A549 (cell line): ENCODE measurements at regions of chr14 and their contacts with region 1.

Region 1: DNA sequence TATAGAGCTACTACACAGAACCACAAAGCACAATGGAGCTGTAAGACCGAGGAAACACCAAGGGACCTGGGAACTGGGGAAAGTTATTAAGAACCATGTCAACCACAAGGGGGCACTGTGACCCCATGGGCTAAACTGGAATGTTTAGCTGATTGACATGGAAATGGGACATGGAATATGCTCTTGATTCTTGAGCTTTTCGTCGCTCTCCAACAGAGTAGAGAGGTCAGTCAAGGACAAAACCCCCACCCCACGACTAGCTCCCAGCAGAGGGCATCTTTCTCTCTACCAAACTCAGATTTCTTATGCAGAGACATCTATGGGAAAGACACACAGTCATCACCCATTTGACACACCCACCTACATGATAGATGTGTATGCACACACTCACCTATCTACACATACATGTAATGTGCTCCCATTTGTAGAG is 10.1 kb downstream of the NDRG2 start:
- DNase-seq: peak; percentile 76 to 86
- ATAC-seq: peak; percentile 92 to 95
- H3K4me3 ChIP-seq: no peak overlapping the region
- H3K27ac ChIP-seq: no peak overlapping the region
- H3K4me1 ChIP-seq: no peaks in the 10 kb centered on the region
- CTCF ChIP-seq: peak; percentile 93
- EP300 ChIP-seq: no peak
- POLR2A ChIP-seq: no peak
- RAD21 ChIP-seq: peak; percentile 90 to 96

Region 2: GRCh38 chr14:20956376-20956976 is 58.3 kb before region 1 on chr14:
- CTCF ChIA-PET with region 1: no interaction called
- POLR2A ChIA-PET with region 1: no interaction called
- DNase-seq: no peak
- ATAC-seq: no peak
- H3K4me3 ChIP-seq: no peak overlapping the region
- H3K27ac ChIP-seq: no peak overlapping the region
- H3K4me1 ChIP-seq: 0 out of 3 replicates have a peak, but pooled peaks cover 4% of the 10 kb centered on the region
- CTCF ChIP-seq: no peak
- EP300 ChIP-seq: no peak
- POLR2A ChIP-seq: no peak
- RAD21 ChIP-seq: no peak

Region 3: DNA sequence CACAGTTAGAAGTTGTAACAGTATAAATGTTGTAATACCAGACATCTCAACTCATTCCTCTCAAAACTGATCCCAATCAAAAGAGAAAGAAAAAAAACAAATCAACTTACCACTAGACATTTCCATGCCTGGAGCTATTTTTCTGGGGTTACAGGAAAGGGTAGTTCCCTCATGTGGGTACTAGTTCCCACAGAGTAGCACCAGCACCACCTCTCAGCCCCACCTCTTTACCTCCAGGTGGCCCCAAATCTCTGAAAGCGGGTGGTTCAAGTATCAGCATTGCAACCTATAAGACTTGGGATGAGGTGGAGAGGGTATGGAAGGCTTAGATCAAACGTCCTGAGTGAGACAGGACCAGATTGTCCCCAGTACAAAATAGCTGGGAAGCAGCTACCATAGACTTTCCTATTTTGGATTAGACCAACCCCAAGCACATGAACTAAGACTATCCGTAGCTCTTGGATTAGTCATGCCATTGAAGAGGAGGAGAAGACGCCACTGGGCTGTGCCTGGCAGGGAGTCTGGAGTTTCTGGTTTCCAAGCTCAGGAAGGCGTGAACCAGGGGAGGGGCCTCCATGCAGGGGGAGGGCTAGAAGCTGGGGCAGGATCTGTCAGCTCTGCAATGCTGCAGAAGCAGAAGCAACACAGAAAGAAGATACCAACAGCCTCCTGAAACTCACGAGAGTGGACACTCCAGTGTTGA is 16.0 kb before region 1 on chr14 and contains the start of gene SLC39A2:
- CTCF ChIA-PET with region 1: interaction called, 185 read pairs
- POLR2A ChIA-PET with region 1: no interaction called
- DNase-seq: no peak
- ATAC-seq: peak in 1 of 2 experiments; percentile 65; a peak in 2 of 6 replicates
- H3K4me3 ChIP-seq: no peak within 1 kb of the TSS
- H3K27ac ChIP-seq: no peak within 1 kb of the TSS
- H3K4me1 ChIP-seq: no peaks in the 10 kb centered on the region
- CTCF ChIP-seq: no peak
- EP300 ChIP-seq: no peak
- POLR2A ChIP-seq: no peak
- RAD21 ChIP-seq: no peak
- polyA plus RNA-seq, gene SLC39A2: 0.09 TPM in 1 of 2 replicates, not detected in the other

Region 4: GRCh38 chr14:21039585-21040369 is 25.0 kb after region 1 on chr14:
- CTCF ChIA-PET with region 1: interaction called, 323 read pairs
- POLR2A ChIA-PET with region 1: interaction called, 5 read pairs
- DNase-seq: peak; percentile 63 to 66
- ATAC-seq: peak; percentile 85 to 94
- H3K4me3 ChIP-seq: no peak overlapping the region
- H3K27ac ChIP-seq: no peak overlapping the region
- H3K4me1 ChIP-seq: no peaks in the 10 kb centered on the region
- CTCF ChIP-seq: peak; percentile 71
- EP300 ChIP-seq: no peak
- POLR2A ChIP-seq: no peak
- RAD21 ChIP-seq: peak; percentile 81 to 82

Region 5: GRCh38 chr14:21063479-21063878 is 48.7 kb after region 1 on chr14:
- CTCF ChIA-PET with region 1: interaction called, 47 read pairs
- POLR2A ChIA-PET with region 1: interaction called, 3 read pairs
- DNase-seq: no peak
- ATAC-seq: peak; percentile 37 to 62; a peak in 3 of 6 replicates
- H3K4me3 ChIP-seq: no peak overlapping the region
- H3K27ac ChIP-seq: peak overlapping the region; percentile 22 to 52; a peak in 3 of 6 replicates
- H3K4me1 ChIP-seq: peaks cover 23% of the 10 kb centered on the region
- CTCF ChIP-seq: no peak
- EP300 ChIP-seq: no peak
- POLR2A ChIP-seq: no peak
- RAD21 ChIP-seq: no peak

Region 6: DNA sequence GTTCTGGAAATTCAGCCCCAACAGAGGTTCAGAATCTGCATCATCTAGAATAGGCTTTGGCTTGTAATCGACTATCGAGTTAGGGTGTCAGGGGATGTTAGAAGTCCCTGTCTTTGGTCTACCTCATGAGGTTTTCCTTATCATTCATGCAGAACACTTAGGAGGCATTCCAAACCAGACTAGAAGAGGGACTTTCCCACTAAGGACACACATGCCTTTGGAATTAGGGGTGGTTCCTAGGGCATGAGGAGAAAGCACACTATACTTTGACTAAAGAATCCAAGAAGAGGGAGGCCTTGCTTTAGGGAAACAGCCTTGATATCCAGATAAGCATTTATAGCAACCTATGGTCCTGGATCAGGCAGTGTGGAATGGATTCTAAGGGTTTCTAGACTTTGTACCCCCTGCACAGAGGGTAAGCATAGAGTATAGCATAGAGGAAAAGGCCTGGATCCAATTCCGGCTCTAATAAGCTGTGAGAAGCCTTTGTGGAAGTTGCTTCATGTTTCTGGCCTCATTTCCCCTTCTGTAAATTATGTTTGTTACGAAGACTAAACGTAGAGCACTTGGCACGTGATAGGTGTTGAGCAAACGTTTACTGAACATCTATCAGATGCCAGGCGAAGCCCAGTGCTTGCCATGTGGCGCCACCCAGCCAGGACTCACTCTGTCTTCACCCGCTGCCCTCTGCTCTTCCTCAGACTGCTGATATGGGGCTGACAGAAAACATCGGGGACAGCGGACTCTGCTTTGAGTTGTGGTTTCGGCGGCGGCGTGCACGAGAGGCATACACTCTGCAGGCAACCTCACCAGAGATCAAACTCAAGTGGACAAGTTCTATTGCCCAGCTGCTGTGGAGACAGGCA is 70.4 kb after region 1 on chr14:
- CTCF ChIA-PET with region 1: interaction called, 36 read pairs
- POLR2A ChIA-PET with region 1: interaction called, 4 read pairs
- DNase-seq: no peak
- ATAC-seq: peak in 1 of 2 experiments; percentile 8; a peak in 2 of 6 replicates
- H3K4me3 ChIP-seq: no peak overlapping the region
- H3K27ac ChIP-seq: no peak overlapping the region
- H3K4me1 ChIP-seq: peaks cover 20% of the 10 kb centered on the region; the same call in 1 of the 3 replicates
- CTCF ChIP-seq: no peak
- EP300 ChIP-seq: no peak
- POLR2A ChIP-seq: no peak
- RAD21 ChIP-seq: no peak

Region 7: GRCh38 chr14:21136024-21136423 is 121.2 kb after region 1 on chr14:
- CTCF ChIA-PET with region 1: interaction called, 20 read pairs
- POLR2A ChIA-PET with region 1: no interaction called
- DNase-seq: peak; percentile 20 to 50
- ATAC-seq: peak in 1 of 2 experiments; percentile 48; a peak in 1 of 6 replicates
- H3K4me3 ChIP-seq: no peak overlapping the region
- H3K27ac ChIP-seq: no peak overlapping the region
- H3K4me1 ChIP-seq: no peaks in the 10 kb centered on the region
- CTCF ChIP-seq: peak; percentile 75
- EP300 ChIP-seq: no peak
- POLR2A ChIP-seq: no peak
- RAD21 ChIP-seq: peak; percentile 43 to 50; a peak in 4 of 5 replicates